ENCODE measurements at regions of chr17 and their contacts with region 1.

Region 1: DNA sequence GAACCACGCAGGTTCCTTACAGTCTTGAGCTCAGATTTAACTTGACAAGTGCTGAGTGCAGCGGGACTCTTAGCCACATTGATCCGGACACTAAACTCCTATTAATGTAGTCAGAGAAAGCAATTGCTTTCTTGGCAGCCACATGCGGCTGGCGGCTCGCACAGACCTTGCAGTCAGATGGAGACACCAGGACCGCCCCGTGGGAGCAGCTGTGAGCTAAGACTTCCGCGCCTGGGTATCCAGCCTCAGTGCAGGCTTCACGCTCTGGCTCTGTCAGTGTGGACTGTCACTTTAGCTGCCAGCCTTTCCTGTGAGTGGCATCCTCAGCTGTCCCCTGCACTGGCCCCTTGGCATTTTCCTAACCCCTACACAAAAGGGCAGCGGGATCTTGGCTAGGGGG is 80.9 kb upstream of the NLRP1 start:
- DNase-seq: no peak
- H3K4me3 ChIP-seq: no peak overlapping the region
- H3K27ac ChIP-seq: no peak overlapping the region
- H3K4me1 ChIP-seq: no peaks in the 10 kb centered on the region
- H3K27me3 ChIP-seq: peaks cover 94% of the 10 kb centered on the region
- CTCF ChIP-seq: no peak

Region 2: GRCh38 chr17:5344914-5345313 is 320.2 kb before region 1 on chr17:
- CTCF ChIA-PET with region 1: no interaction called
- POLR2A ChIA-PET with region 1: no interaction called
- intact Hi-C with region 1: no loop called
- DNase-seq: no peak
- H3K4me3 ChIP-seq: no peak overlapping the region
- H3K27ac ChIP-seq: no peak overlapping the region
- H3K4me1 ChIP-seq: no peaks in the 10 kb centered on the region
- H3K27me3 ChIP-seq: no peaks in the 10 kb centered on the region
- CTCF ChIP-seq: no peak

Region 3: GRCh38 chr17:5651348-5651747 is 13.8 kb before region 1 on chr17:
- CTCF ChIA-PET with region 1: no interaction called
- POLR2A ChIA-PET with region 1: no interaction called
- intact Hi-C with region 1: no loop called
- DNase-seq: no peak
- H3K4me3 ChIP-seq: no peak overlapping the region
- H3K27ac ChIP-seq: no peak overlapping the region
- H3K4me1 ChIP-seq: no peaks in the 10 kb centered on the region
- H3K27me3 ChIP-seq: peaks cover 48% of the 10 kb centered on the region
- CTCF ChIP-seq: no peak

Region 4: DNA sequence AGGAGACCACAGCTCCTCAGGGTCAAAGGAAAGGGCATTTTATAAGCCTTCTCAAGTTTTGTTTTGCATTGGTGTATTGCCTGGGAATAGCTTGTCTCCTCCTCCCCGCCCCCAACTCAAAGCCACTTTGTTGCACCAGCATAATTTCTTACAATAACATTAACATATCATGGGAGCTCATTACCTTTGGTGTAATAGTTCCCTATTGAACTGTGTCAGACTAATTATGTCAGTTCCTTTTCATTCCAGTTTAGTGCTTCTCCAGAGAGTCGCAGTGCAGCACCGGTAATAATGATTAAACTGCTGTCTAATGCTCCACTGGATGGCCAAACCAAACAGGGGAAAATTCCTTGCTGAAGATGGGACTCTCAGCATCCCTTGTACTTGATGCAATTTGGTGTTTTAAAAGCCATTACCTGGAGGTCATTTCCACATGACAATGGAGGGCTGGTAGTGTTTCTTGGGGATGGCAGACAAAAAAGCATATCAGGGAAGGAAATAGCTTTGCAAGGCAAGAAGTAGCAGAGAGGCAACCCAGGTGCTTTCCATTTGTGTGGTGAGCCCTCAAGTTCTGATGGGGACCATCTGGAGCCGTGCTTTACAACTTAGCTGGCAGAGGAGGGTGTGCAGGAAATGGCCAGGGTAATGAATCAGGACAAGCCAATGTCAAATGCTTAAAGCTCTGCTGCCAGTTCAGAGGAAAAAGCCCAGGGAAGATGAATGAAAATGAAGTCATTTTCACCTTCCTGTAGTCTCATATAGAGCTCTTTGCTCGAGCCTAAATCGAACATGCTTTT is 10.7 kb after region 1 on chr17:
- CTCF ChIA-PET with region 1: no interaction called
- POLR2A ChIA-PET with region 1: no interaction called
- intact Hi-C with region 1: no loop called
- DNase-seq: no peak
- H3K4me3 ChIP-seq: no peak overlapping the region
- H3K27ac ChIP-seq: no peak overlapping the region
- H3K4me1 ChIP-seq: no peaks in the 10 kb centered on the region
- H3K27me3 ChIP-seq: peaks cover 74% of the 10 kb centered on the region
- CTCF ChIP-seq: no peak

Region 5: GRCh38 chr17:6257336-6257735 is 592.2 kb after region 1 on chr17:
- CTCF ChIA-PET with region 1: no interaction called
- POLR2A ChIA-PET with region 1: interaction called, 20 read pairs
- intact Hi-C with region 1: no loop called
- DNase-seq: no peak
- H3K4me3 ChIP-seq: no peak overlapping the region
- H3K27ac ChIP-seq: no peak overlapping the region
- H3K4me1 ChIP-seq: no peaks in the 10 kb centered on the region
- H3K27me3 ChIP-seq: peaks cover 92% of the 10 kb centered on the region
- CTCF ChIP-seq: no peak